T-cell (primary cell): ENCODE measurements at regions of chr6 and their contacts with region 1.

Region 1: GRCh38 chr6:593139-593906 is 63.6 kb downstream of the HUS1B start:
- DNase-seq: peak; percentile 17 to 82 (median 52)
- ATAC-seq: peak; percentile 47 to 68 (median 61)
- H3K4me3 ChIP-seq: no peak overlapping the region
- H3K4me3 Mint-ChIP-seq: no peak overlapping the region
- H3K27ac ChIP-seq: no peak overlapping the region
- H3K27ac Mint-ChIP-seq: peak overlapping the region in 1 of 2 donors; percentile 46
- H3K4me1 ChIP-seq: no peaks in the 10 kb centered on the region
- H3K4me1 Mint-ChIP-seq: peaks cover 0 to 2% (median 0%) of the 10 kb centered on the region in 3 donors
- H3K27me3 ChIP-seq: no peaks in the 10 kb centered on the region
- H3K27me3 Mint-ChIP-seq: no peaks in the 10 kb centered on the region

Region 2: GRCh38 chr6:436308-437036 is 156.9 kb before region 1 on chr6:
- CTCF ChIA-PET with region 1: no interaction called
- POLR2A ChIA-PET with region 1: no interaction called
- DNase-seq: no peak
- ATAC-seq: no peak
- H3K4me3 ChIP-seq: no peak overlapping the region
- H3K4me3 Mint-ChIP-seq: no peak overlapping the region
- H3K27ac ChIP-seq: no peak overlapping the region
- H3K27ac Mint-ChIP-seq: no peak overlapping the region
- H3K4me1 ChIP-seq: peaks cover 6 to 19% of the 10 kb centered on the region in 2 experiments
- H3K4me1 Mint-ChIP-seq: peaks cover 17 to 22% (median 18%) of the 10 kb centered on the region in 3 donors
- H3K27me3 ChIP-seq: no peaks in the 10 kb centered on the region
- H3K27me3 Mint-ChIP-seq: no peaks in the 10 kb centered on the region

Region 3: DNA sequence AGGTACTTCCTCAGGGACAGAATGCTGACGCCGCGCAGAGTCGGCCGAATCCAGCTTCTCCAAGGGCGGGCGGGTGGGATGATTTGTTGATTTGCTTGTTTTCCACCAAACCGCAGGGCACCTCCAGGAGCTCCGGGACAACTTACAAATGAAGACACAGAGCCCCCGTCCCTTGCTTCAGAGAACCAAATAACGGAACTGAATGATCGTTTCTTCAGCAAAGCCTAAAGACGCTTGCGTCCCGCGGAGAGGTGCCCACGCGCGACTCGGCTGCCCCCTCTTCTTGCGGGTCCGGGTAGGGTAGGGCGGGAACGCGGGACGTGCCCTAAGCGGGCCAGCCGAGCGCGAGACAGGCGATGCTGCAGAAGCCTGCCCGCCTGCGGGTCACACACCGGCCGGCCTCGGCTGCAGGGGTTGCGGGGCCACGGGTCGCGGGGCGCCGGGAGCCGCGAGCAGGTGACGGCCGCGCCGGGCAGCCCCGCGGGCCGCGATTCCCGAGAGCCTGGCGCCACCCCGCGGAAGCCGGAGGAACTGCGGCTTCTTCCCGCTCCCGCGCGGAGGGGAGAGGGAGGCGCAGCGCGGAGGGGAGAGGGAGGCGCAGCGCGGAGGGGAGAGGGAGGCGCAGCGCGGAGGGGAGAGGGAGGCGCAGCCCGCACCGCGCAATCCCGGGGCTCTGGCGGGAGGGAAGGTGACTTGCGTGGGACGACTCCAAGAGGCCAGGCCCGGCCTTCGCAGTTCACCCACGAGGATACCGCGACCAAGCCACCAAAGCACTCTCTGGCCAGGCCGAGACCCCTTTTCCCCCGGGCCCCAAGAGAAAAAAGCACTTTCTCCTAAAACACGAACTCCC is 788.4 kb after region 1 on chr6:
- CTCF ChIA-PET with region 1: interaction called in 1 of 2 experiments, 10 read pairs
- POLR2A ChIA-PET with region 1: no interaction called
- DNase-seq: peak in 24 of 35 experiments; percentile 13 to 59 (median 31)
- ATAC-seq: peak; percentile 58 to 69 (median 64)
- H3K4me3 ChIP-seq: no peak overlapping the region
- H3K4me3 Mint-ChIP-seq: peak overlapping the region in 1 of 3 donors; percentile 71
- H3K27ac ChIP-seq: no peak overlapping the region
- H3K27ac Mint-ChIP-seq: no peak overlapping the region
- H3K4me1 ChIP-seq: peaks cover 4 to 50% of the 10 kb centered on the region in 2 experiments
- H3K4me1 Mint-ChIP-seq: peaks cover 31 to 45% (median 38%) of the 10 kb centered on the region in 3 donors
- H3K27me3 ChIP-seq: peaks cover 27 to 90% of the 10 kb centered on the region in 2 experiments
- H3K27me3 Mint-ChIP-seq: peaks cover 49 to 72% of the 10 kb centered on the region in 2 donors

Region 4: GRCh38 chr6:1396952-1397868 is 803.9 kb after region 1 on chr6:
- CTCF ChIA-PET with region 1: interaction called, 5 to 25 read pairs
- POLR2A ChIA-PET with region 1: no interaction called
- DNase-seq: peak; percentile 28 to 80 (median 60)
- ATAC-seq: peak; percentile 29 to 68 (median 62)
- H3K4me3 ChIP-seq: no peak overlapping the region
- H3K4me3 Mint-ChIP-seq: no peak overlapping the region
- H3K27ac ChIP-seq: no peak overlapping the region
- H3K27ac Mint-ChIP-seq: no peak overlapping the region
- H3K4me1 ChIP-seq: peaks cover 0 to 12% of the 10 kb centered on the region in 2 experiments
- H3K4me1 Mint-ChIP-seq: peaks cover 5 to 15% (median 7%) of the 10 kb centered on the region in 3 donors
- H3K27me3 ChIP-seq: peaks cover 6 to 66% of the 10 kb centered on the region in 2 experiments
- H3K27me3 Mint-ChIP-seq: peaks cover 45 to 58% of the 10 kb centered on the region in 2 donors